Left ventricle myocardium inferior (tissue), 1 donor: ENCODE measurements at regions of chr14 and their contacts with region 1.

Region 1: GRCh38 chr14:64823305-64823861 is 56.3 kb downstream of the SPTB start:
- DNase-seq: peak; percentile 73
- H3K4me3 ChIP-seq: no peak overlapping the region
- H3K27ac ChIP-seq: peak overlapping the region; percentile 28
- H3K4me1 ChIP-seq: peaks cover 49% of the 10 kb centered on the region
- H3K27me3 ChIP-seq: no peaks in the 10 kb centered on the region
- CTCF ChIP-seq: peak; percentile 83

Region 2: DNA sequence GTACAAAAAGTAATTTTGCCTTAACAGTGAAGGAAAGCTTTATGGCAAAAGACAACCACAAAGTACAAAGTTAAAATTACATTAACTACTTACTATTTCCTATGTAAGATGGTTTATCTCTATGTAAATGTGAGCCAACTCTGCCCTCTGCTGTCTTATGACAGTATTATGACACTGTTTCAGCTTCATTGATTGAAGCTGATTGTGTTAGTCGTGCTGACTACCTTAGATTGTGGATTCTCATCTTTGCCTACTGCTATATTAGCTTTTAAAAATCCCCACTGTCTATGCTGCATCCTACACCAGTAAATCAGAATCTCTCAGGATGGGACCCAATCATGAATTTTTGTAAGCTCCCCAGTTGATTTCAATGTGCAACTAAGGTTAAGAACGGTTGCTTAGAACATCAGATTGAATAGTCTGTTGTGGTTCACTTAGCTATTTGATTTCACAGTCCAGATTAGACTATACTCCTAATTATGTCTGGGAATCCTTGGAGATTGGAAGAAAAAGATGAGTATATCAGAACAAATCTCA is 68.5 kb after region 1 on chr14:
- intact Hi-C with region 1: loop called (anchors 5 kb)
- DNase-seq: no peak
- H3K4me3 ChIP-seq: no peak overlapping the region
- H3K27ac ChIP-seq: no peak overlapping the region
- H3K4me1 ChIP-seq: no peaks in the 10 kb centered on the region
- H3K27me3 ChIP-seq: peaks cover 18% of the 10 kb centered on the region
- CTCF ChIP-seq: peak; percentile 73